Left cardiac atrium (tissue), 4 donors: ENCODE measurements at regions of chr5 and their contacts with region 1.

Region 1: DNA sequence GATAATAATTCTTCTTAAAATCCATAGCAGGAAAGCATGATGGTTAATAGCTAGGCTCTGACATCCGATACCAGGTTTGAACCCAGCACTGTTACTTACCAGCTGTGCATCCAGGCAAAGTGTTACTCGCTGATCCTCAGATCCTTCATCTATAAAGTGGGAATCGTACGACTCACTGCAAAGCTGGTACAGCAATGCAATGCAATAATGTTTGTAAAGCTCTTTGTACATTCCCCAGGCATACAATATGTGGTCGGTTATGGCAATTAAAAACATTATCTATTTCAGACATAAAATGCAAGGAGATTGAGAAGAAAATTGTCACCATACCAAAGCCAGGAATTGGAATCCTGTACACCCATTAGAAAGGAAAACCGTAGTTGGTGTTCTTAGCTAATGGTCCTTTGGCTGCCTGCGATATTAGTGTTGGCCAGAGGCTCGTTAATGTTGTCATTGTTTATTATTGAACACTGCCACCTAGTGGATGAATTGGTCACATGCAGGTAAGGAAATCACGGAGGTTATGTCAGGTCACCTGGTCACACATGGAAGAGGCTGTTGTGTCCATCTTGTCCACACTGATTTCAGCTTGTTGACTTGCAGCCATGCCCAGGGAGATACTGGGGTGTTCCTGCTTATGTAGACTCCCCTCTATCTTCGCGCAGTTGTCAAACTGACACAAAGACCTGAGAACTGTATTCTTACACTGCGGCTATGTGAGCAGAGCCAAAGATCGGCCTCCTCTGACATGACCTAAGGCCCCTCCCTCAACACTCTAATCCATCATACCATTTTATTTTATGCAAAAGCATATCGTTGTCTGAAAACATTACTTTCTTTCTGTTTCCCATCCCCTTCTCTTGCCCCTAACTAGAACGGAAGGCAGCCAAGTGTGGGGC is 87.5 kb upstream of the PPP2R2B start:
- DNase-seq: peak; percentile 46
- ATAC-seq: peak; percentile 88 to 95

Region 2: GRCh38 chr5:146466521-146467349 is 499.3 kb before region 1 on chr5:
- intact Hi-C with region 1: loop called in 1 of 2 experiments (anchors 5 kb)
- DNase-seq: no peak
- ATAC-seq: no peak

Region 3: GRCh38 chr5:146541958-146542849 is 423.8 kb before region 1 on chr5:
- intact Hi-C with region 1: loop called (anchors 2 to 5 kb)
- DNase-seq: peak; percentile 65
- ATAC-seq: peak; percentile 81 to 85

Region 4: GRCh38 chr5:146565764-146566367 is 400.1 kb before region 1 on chr5:
- intact Hi-C with region 1: loop called in 1 of 2 experiments (anchors 5 kb)
- DNase-seq: peak; percentile 29
- ATAC-seq: peak; percentile 63 to 85